ENCODE measurements at regions of chr3 and their contacts with region 1.

Region 1: DNA sequence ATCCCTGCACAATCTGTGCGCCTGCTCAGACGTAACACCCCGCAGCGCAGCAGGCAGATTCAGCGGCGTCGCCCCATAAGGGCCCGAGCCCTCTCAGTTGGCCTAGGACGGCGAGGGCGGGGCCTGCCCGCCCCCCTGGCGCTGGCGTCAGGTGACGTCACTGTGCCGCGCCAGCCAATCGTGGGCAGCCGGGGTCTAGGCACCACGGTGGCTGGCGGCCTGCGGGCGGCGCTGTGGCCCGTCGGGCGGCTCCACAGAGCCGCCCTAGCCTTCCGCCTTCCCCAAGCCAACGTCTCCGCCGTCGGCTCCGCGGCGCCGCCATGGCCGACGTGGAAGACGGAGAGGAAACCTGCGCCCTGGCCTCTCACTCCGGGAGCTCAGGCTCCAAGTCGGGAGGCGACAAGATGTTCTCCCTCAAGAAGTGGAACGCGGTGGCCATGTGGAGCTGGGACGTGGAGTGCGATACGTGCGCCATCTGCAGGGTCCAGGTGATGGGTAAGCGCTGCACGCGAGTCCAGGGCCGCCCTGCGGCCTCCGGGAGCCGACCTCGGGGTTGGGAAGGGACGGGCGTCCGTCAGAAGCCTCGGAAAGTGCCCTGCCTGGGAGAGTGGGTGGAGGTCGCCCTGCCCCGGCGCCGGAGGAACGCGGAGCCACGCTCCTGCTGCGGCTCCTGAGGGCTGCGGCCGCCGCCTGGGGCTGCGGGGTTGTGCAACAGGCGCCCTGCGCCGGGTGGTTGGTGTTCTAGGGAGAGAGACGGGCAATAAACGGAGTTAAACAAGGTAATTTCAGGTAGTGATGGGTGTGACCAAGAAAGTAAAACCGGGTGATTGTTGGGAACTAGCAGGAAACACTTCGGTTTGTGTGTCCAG is at the start of gene RNF7:
- H3K4me3 ChIP-seq: peak within 1 kb of the TSS; percentile 94
- H3K27ac ChIP-seq: peak within 1 kb of the TSS; percentile 65
- H3K4me1 ChIP-seq: no peaks in the 10 kb centered on the region
- CTCF ChIP-seq: peak; percentile 67

Region 2: DNA sequence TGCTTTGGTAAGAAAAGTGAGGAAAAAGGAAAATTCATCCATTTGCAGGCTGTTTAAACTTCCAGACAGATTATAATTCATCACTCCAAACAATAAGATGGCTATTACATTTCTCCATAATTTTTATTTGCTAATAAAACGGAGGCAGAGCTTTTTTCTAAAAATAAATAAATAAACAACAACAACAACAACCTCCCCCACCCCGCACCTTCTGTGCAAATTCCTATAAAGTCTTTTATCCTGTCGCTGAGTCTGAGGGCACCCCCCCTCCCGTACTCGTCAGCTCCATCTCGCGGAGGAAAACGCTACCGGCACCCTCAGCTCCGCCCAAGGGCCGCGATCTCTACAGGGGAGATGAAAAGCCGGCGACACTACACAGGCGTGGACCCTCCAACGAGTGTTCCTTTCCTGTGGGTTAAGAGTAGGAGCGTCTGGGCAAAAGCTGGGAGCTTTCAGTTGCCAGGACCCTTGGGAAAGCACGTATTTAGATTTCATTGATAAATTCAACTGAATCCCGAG is 137.2 kb after region 1 on chr3:
- CTCF ChIA-PET with region 1: interaction called, 12 read pairs
- POLR2A ChIA-PET with region 1: interaction called, 5 read pairs
- H3K4me3 ChIP-seq: peak overlapping the region; percentile 68
- H3K27ac ChIP-seq: peak overlapping the region; percentile 81
- H3K4me1 ChIP-seq: no peaks in the 10 kb centered on the region
- CTCF ChIP-seq: 0 out of 2 replicates have a peak, but pooled peaks have one; percentile 58

Region 3: DNA sequence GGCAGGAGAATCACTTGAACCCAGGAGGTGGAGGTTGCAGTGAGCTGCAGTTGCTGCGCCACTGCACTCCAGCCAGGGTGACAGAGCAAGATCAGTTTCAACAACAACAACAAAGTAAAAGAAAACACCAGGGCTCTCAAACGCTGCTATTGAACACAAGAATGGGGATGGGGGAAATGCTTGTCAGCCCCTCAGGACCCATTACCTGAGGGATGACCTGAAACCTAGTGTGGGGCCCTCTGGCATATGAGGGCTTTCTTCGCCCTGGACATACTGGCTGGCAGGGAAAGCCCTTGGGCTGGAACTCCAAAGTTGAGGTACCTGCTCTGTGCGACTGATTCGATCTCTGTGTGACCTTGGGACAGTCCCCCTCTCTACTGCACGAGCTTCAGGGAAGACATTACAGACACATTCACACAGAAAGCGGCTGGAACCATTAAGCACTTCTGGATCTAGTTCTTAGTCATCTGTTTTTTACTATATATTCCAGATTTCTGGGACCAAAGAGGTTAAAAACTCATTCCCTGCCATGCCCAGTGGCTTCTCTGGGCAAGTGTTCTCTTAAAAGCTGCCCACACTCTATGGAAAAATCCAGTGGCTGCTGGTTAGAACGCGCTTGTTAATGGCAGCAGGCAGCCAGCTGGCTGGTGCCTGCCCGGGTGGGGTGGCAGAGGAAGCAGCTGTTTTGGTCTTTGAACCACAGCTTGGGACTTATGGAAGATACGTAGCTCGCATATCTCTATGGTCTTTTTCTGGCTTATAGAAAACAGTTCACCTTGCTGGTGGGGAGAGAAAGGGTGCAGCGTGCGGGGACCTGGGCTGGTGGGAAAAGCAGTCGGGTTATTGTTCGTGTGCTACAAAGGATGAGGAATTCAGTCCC is 195.4 kb after region 1 on chr3:
- CTCF ChIA-PET with region 1: no interaction called
- POLR2A ChIA-PET with region 1: no interaction called
- H3K4me3 ChIP-seq: no peak overlapping the region
- H3K27ac ChIP-seq: no peak overlapping the region
- H3K4me1 ChIP-seq: no peaks in the 10 kb centered on the region
- CTCF ChIP-seq: no peak

Measured in HEK293 (cell line).